ENCODE measurements at regions of chr11 and their contacts with region 1.

Region 1: GRCh38 chr11:86302100-86302793 is at the start of gene HIKESHI:
- DNase-seq: peak; percentile 93 to 97
- ATAC-seq: peak; percentile 100
- H3K4me3 ChIP-seq: peak within 1 kb of the TSS; percentile 66
- H3K27ac ChIP-seq: peak within 1 kb of the TSS; percentile 83 to 94
- H3K4me1 ChIP-seq: peaks cover 15% of the 10 kb centered on the region; the same call in 2 of the 3 replicates
- CTCF ChIP-seq: no peak
- EP300 ChIP-seq: no peak
- POLR2A ChIP-seq: peak; percentile 64
- RAD21 ChIP-seq: no peak; a peak in 1 of 5 replicates
- polyA plus RNA-seq, gene HIKESHI: 101 and 137 TPM in 2 replicates

Region 2: GRCh38 chr11:86174101-86175046 is 127.9 kb before region 1 on chr11:
- CTCF ChIA-PET with region 1: no interaction called
- POLR2A ChIA-PET with region 1: no interaction called
- DNase-seq: peak in 1 of 2 experiments; percentile 67
- ATAC-seq: peak; percentile 82 to 86
- H3K4me3 ChIP-seq: no peak overlapping the region
- H3K27ac ChIP-seq: peak overlapping the region; percentile 49 to 86
- H3K4me1 ChIP-seq: peaks cover 37% of the 10 kb centered on the region
- CTCF ChIP-seq: no peak
- EP300 ChIP-seq: peak in 1 of 2 experiments; percentile 29; a peak in 1 of 5 replicates
- POLR2A ChIP-seq: no peak
- RAD21 ChIP-seq: no peak

Region 3: DNA sequence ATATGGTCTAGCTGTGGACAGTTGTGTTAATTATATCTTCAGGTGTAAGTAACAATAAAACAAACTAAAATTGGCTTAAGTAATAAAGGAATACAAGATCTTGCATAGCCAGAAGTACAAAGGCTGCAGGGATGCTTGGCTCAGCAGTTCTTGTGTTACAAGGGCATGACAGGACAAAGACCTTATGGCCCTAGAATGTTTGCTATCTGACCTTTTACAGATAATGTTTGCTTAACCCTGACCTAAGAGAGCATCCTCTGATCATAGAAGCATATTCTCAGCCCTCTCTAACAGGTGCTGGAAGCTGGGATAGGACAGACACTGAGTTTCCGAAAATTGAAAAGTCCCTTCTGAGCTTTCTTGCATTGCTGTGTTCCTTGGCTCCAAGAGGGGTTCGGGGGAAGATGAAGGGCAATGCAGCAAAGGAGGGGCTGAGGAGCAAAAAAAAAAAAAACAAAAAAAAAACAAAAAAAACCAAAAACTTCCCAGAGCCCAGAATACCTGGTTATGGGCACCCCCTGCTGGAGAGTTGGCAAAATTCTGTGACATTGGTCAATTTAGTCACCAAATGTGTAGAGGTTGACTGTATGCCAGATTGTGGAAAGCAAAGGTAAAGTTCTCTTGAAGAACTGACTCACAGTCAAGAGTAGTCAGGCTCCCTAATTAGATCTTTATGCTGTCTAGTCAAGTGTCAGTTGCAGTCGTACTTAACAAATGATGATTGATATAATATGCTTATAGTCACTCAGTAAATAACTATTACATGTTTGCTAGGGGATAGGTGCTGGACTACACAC is 10.6 kb before region 1 on chr11:
- CTCF ChIA-PET with region 1: interaction called, 18 read pairs
- POLR2A ChIA-PET with region 1: no interaction called
- DNase-seq: peak; percentile 49
- ATAC-seq: peak; percentile 71 to 74
- H3K4me3 ChIP-seq: no peak overlapping the region
- H3K27ac ChIP-seq: no peak overlapping the region
- H3K4me1 ChIP-seq: no peaks in the 10 kb centered on the region
- CTCF ChIP-seq: peak; percentile 90
- EP300 ChIP-seq: no peak
- POLR2A ChIP-seq: no peak
- RAD21 ChIP-seq: peak; percentile 82 to 86

Measured in A549 (cell line).